RWPE1 (cell line): ENCODE measurements at regions of chr16 and their contacts with region 1.

Region 1: GRCh38 chr16:74862741-74863244 is 88.2 kb upstream of the FA2H start:
- DNase-seq: peak; percentile 65
- H3K27ac ChIP-seq: no peak overlapping the region
- CTCF ChIP-seq: peak; percentile 90

Region 2: DNA sequence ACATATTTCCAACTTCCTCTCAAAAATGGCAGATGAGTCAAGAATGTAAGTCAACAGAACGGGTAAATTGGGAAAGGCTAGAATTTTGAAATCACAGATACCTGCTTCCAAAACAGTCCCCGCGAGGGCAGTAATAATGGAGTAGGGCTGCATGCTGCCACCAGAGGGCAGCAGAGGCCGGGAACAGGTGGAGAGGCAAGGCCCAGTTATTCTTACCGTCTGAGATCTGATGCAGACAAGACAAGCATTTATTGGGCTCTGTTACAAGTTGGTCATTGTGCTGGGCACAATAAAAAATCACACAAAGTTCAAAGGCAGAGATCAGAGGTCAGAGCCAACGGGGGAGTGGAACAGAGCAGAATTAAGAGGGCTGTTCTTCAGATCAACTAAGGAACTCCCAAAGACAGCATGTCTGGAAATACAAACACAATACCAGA is 153.3 kb before region 1 on chr16:
- CTCF ChIA-PET with region 1: interaction called, 83 read pairs
- POLR2A ChIA-PET with region 1: interaction called, 4 read pairs
- DNase-seq: peak; percentile 78
- H3K27ac ChIP-seq: no peak overlapping the region
- CTCF ChIP-seq: peak; percentile 97

Region 3: GRCh38 chr16:74729783-74730699 is 132.8 kb before region 1 on chr16:
- CTCF ChIA-PET with region 1: interaction called, 18 read pairs
- POLR2A ChIA-PET with region 1: interaction called, 7 read pairs
- DNase-seq: peak; percentile 46
- H3K27ac ChIP-seq: peak overlapping the region; percentile 95
- CTCF ChIP-seq: no peak

Region 4: GRCh38 chr16:74830648-74831047 is 32.1 kb before region 1 on chr16:
- CTCF ChIA-PET with region 1: interaction called, 12 read pairs
- POLR2A ChIA-PET with region 1: no interaction called
- DNase-seq: no peak
- H3K27ac ChIP-seq: peak overlapping the region; percentile 62
- CTCF ChIP-seq: no peak

Region 5: GRCh38 chr16:74852500-74852875 is 10.3 kb before region 1 on chr16:
- CTCF ChIA-PET with region 1: interaction called, 22 read pairs
- POLR2A ChIA-PET with region 1: no interaction called
- DNase-seq: no peak
- H3K27ac ChIP-seq: no peak overlapping the region
- CTCF ChIP-seq: no peak

Region 6: GRCh38 chr16:74954763-74955162 is 92.0 kb after region 1 on chr16:
- CTCF ChIA-PET with region 1: no interaction called
- POLR2A ChIA-PET with region 1: no interaction called
- DNase-seq: no peak
- H3K27ac ChIP-seq: no peak overlapping the region
- CTCF ChIP-seq: no peak

Region 7: GRCh38 chr16:75342308-75342829 is 479.6 kb after region 1 on chr16:
- CTCF ChIA-PET with region 1: no interaction called
- POLR2A ChIA-PET with region 1: no interaction called
- DNase-seq: peak; percentile 48
- H3K27ac ChIP-seq: peak overlapping the region; percentile 70
- CTCF ChIP-seq: no peak